ENCODE measurements at regions of chr10 and their contacts with region 1.

Region 1: GRCh38 chr10:31886885-31887284 is 41.7 kb downstream of the ARHGAP12 start:
- DNase-seq: no peak
- ATAC-seq: no peak
- H3K4me3 ChIP-seq: no peak overlapping the region
- H3K4me3 Mint-ChIP-seq: no peak overlapping the region
- H3K27ac ChIP-seq: no peak overlapping the region
- H3K27ac Mint-ChIP-seq: no peak overlapping the region
- H3K4me1 ChIP-seq: no peaks in the 10 kb centered on the region
- H3K4me1 Mint-ChIP-seq: peaks cover 0 to 63% (median 51%) of the 10 kb centered on the region in 7 donors
- H3K27me3 ChIP-seq: no peaks in the 10 kb centered on the region
- H3K27me3 Mint-ChIP-seq: no peaks in the 10 kb centered on the region

Region 2: DNA sequence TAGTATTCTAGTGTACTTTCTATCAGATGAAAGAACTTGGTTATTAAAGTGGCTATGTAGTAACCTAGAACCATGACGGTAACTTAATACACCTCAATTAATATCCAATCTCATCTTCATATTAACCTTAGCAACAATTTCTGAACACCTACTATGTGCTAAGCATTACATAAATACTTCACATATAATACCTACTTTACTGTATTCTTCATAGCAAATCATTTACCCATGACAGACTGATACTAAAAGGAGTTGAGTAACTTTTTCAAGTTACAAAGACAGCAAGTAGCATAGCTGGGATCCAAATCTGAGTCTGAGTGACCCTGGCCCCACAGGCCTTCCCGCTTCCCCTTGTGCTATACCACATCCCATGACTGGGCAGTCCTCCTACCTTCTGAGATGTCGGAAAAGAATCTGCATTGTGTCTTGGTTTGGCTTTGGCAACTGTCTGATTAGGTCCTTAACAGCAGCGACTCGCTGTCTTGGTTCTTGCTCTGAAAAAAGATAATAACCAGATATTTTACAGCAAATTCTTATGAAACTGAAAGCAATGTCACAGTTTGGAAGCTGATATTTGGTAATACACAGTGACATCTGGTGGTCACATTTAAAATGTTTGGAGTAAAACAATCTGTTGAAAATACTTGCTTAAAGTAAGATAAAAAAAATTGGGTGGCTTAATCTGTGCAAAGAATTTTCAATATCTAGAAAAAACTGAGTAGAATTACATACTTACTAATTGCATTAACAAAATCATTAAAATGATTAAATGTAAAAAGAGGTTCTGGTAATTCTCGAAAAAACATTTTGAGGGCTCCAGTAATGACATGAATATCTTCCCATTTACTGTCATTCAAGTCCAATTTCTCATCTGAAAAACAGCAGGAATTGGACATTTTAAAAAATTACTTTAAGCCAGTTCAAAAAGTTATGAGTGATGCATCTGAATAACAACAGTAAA is 78.3 kb before region 1 on chr10:
- CTCF ChIA-PET with region 1: no interaction called
- POLR2A ChIA-PET with region 1: no interaction called
- intact Hi-C with region 1: no loop called
- DNase-seq: peak in 8 of 9 donors; percentile 21 to 62 (median 48)
- ATAC-seq: peak; percentile 77
- H3K4me3 ChIP-seq: no peak overlapping the region
- H3K4me3 Mint-ChIP-seq: peak overlapping the region in 3 of 10 donors; percentile 51 to 78 (median 56)
- H3K27ac ChIP-seq: no peak overlapping the region
- H3K27ac Mint-ChIP-seq: peak overlapping the region in 8 of 9 donors; percentile 17 to 94 (median 71)
- H3K4me1 ChIP-seq: no peaks in the 10 kb centered on the region
- H3K4me1 Mint-ChIP-seq: peaks cover 2 to 11% (median 6%) of the 10 kb centered on the region in 7 donors
- H3K27me3 ChIP-seq: no peaks in the 10 kb centered on the region
- H3K27me3 Mint-ChIP-seq: no peaks in the 10 kb centered on the region

Region 3: DNA sequence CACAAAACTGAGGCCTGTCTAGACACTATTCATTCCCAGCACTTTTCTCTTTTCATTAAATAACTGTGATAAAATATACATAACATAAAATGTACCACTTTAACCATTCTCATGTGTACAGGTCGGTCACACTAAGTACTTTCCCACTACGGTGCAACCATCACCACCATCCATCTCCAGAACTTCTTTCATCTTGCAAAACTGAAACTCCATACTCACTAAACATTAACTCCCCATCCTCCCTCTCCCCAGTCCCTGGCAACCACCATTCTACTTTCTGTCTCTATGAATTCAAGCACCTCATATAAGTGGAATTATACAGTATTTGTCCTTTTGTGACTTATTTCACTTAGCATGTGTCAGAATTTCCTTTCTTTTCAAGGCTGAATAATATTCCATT is 11.3 kb before region 1 on chr10:
- CTCF ChIA-PET with region 1: no interaction called
- POLR2A ChIA-PET with region 1: no interaction called
- intact Hi-C with region 1: loop called in 1 of 2 experiments (anchors 2 kb)
- DNase-seq: no peak
- ATAC-seq: no peak
- H3K4me3 ChIP-seq: no peak overlapping the region
- H3K4me3 Mint-ChIP-seq: no peak overlapping the region
- H3K27ac ChIP-seq: no peak overlapping the region
- H3K27ac Mint-ChIP-seq: peak overlapping the region in 1 of 9 donors; percentile 27
- H3K4me1 ChIP-seq: no peaks in the 10 kb centered on the region
- H3K4me1 Mint-ChIP-seq: peaks cover 14 to 55% (median 26%) of the 10 kb centered on the region in 7 donors
- H3K27me3 ChIP-seq: no peaks in the 10 kb centered on the region
- H3K27me3 Mint-ChIP-seq: no peaks in the 10 kb centered on the region

Measured in naive thymus-derived CD4-positive, alpha-beta T cell (primary cell).